ENCODE measurements at regions of chr15 and their contacts with region 1.

Region 1: DNA sequence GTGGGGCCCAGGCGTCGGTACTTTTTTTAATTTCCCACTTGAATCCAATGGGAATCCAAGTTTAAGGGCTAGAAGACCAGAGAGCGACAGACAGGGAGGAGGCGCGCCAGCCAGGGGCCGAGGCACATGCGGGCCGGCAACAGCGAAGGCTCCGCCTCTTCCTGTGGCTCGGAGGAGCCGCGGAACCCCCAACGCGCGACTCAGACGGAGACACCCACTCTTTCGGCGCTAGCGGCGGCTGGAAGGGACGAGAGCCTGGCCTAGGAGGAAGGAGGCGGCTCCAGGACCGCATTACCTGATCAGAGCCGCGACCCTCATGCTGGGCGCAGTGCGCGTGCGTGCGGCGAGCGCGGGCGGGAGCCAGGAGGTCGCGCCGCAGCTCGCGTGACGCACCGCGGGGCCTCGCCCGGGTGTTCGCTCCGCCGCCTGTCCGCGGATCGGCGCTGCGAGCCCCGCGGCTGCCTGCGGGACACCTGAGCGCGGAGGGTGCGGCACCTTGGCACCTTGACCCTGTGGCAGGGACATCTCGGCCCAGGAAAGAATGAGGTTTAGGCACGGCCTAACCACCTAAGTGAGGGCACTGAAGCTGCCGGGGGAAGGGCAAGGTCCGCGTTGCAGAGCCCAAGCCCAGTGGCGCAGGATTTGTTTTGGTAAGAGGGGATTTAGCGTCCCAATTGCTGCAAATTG is at the start of gene DPH6:
- DNase-seq: peak; percentile 60 to 80
- H3K4me3 ChIP-seq: peak within 1 kb of the TSS; percentile 72
- H3K27ac ChIP-seq: peak within 1 kb of the TSS; percentile 94
- H3K4me1 ChIP-seq: peaks cover 10% of the 10 kb centered on the region
- H3K27me3 ChIP-seq: no peaks in the 10 kb centered on the region
- CTCF ChIP-seq: no peak
- total RNA-seq, gene DPH6: 14.8 and 19.2 TPM in 2 replicates

Region 2: DNA sequence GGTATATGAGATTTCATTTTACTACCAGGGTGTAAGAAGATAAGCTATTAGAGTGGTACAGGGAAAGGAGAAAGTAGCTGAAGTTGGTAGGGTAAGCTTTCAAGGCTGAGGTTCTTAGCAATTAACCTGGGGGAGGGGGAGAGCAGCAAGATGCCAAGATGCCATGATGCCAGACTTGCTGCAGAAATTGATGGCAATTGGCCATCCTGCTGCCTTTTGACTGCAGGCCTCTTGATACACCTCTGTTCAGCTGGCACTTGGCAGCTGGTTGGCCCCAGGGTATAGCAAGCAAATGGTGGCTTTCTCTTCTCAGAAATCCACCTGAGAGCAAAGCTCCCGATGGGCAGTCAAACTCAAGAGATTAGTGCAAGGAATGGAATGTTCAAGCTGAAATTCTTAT is 21.4 kb after region 1 on chr15:
- CTCF ChIA-PET with region 1: no interaction called
- POLR2A ChIA-PET with region 1: no interaction called
- intact Hi-C with region 1: no loop called
- DNase-seq: no peak
- H3K4me3 ChIP-seq: no peak overlapping the region
- H3K27ac ChIP-seq: no peak overlapping the region
- H3K4me1 ChIP-seq: no peaks in the 10 kb centered on the region
- H3K27me3 ChIP-seq: no peaks in the 10 kb centered on the region
- CTCF ChIP-seq: no peak

Region 3: DNA sequence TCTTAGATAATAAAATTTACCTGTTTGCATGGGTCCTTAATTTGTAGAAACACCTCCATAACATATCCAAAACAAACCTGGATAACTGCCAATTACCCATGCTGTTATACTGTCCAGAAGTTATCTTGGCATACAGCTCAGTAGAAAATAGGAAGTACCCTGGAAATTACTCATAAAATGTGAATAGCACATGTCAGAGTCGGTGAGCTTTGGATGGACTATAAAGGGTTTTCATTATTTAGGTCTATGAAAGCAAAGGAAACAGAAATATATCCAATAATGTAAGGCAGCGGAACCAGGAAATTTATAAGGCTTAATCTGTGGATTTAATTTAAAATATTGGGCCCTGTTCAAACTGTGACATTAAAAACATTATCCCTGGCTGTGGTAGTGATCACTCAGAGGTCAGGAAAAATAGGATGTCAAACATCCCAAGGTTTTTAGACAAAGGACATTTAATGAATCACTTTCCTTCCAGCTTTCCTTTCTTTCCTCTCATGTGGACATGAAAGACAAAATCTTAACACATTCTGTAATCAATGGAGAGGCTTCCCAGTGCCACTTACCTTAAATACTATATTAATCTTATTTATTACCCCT is 459.0 kb after region 1 on chr15:
- CTCF ChIA-PET with region 1: no interaction called
- POLR2A ChIA-PET with region 1: interaction called, 43 read pairs
- intact Hi-C with region 1: no loop called
- DNase-seq: no peak
- H3K4me3 ChIP-seq: no peak overlapping the region
- H3K27ac ChIP-seq: no peak overlapping the region
- H3K4me1 ChIP-seq: no peaks in the 10 kb centered on the region
- H3K27me3 ChIP-seq: no peaks in the 10 kb centered on the region
- CTCF ChIP-seq: no peak

Region 4: GRCh38 chr15:36877294-36877693 is 1331.3 kb after region 1 on chr15:
- CTCF ChIA-PET with region 1: interaction called, 18 read pairs
- POLR2A ChIA-PET with region 1: no interaction called
- intact Hi-C with region 1: no loop called
- DNase-seq: no peak
- H3K4me3 ChIP-seq: no peak overlapping the region
- H3K27ac ChIP-seq: no peak overlapping the region
- H3K4me1 ChIP-seq: no peaks in the 10 kb centered on the region
- H3K27me3 ChIP-seq: no peaks in the 10 kb centered on the region
- CTCF ChIP-seq: no peak

Measured in PC-9 (cell line).